Aorta (tissue), 5 donors: ENCODE measurements at regions of chrX and their contacts with region 1.

Region 1: DNA sequence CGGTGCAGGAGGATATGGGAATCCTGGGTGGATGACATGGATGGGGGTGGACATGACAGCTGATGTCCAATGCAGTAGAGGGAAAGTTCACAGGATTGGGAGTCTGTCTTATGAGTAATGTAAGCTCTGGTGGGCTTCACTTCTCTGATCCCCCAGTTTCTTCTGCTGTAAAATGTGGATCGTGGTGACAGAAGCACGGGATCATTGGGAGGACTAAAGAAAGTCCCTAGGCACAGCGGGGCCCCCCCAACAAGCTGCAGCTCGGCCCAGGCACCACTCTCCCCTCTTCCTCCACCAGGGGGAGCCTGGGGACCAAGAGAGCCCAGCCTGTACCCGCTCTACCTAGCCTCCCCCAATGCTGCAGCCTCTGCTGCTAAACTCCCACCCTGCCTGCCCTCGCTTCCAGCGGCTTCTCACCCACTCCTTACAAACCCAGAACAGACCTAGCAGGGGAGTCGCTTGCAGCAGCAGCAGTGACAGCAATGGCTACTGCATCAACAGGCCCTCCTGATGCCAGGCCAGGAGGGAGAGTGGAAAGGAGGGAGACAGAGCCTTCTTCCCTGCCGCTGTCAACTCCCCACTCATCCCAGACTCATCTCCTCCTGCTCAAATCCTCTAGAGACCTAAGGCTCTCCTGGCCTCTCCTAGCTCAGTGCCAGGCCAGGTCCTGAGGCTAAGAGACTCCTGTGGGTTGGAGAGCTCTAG is 36.1 kb upstream of the IQSEC2 start:
- DNase-seq: peak; percentile 76 to 88
- ATAC-seq: peak; percentile 75
- H3K4me3 ChIP-seq: no peak overlapping the region
- H3K27ac ChIP-seq: no peak overlapping the region
- H3K4me1 ChIP-seq: no peaks in the 10 kb centered on the region
- H3K27me3 ChIP-seq: no peaks in the 10 kb centered on the region

Region 2: GRCh38 chrX:53422086-53422860 is 104.8 kb after region 1 on chrX and contains the start of gene SMC1A:
- intact Hi-C with region 1: loop called in 1 of 2 experiments (anchors 5 kb)
- DNase-seq: peak; percentile 99 to 100
- ATAC-seq: peak; percentile 99
- H3K4me3 ChIP-seq: peak within 1 kb of the TSS; percentile 77 to 83
- H3K27ac ChIP-seq: peak within 1 kb of the TSS in 1 of 2 donors; percentile 98
- H3K4me1 ChIP-seq: no peaks in the 10 kb centered on the region
- H3K27me3 ChIP-seq: no peaks in the 10 kb centered on the region
- total RNA-seq, gene SMC1A: 53.9 to 57.3 TPM

Region 3: DNA sequence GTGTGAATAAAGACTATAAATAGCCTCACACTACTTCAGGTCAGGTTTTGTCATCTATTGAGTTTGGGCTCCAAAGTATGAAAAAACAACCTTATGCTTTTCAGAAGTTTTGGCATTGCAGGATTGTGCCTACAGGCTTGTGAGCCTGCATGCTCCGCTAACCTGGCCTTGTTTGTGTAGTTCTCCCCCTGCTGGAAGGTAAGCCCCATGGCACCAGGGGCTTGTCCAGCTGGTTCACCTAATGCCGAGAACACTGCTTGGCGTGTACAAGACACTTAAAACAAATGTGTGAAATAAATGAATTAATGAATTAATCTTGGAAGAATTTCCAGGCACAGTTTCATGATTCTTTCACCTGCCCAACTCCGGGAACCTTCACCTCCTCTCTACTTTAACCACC is 118.5 kb after region 1 on chrX:
- intact Hi-C with region 1: loop called (anchors 5 kb)
- DNase-seq: peak in 1 of 2 donors; percentile 70
- ATAC-seq: peak; percentile 61
- H3K4me3 ChIP-seq: no peak overlapping the region
- H3K27ac ChIP-seq: no peak overlapping the region
- H3K4me1 ChIP-seq: no peaks in the 10 kb centered on the region
- H3K27me3 ChIP-seq: no peaks in the 10 kb centered on the region